B cell (primary cell): ENCODE measurements at regions of chr11 and their contacts with region 1.

Region 1: DNA sequence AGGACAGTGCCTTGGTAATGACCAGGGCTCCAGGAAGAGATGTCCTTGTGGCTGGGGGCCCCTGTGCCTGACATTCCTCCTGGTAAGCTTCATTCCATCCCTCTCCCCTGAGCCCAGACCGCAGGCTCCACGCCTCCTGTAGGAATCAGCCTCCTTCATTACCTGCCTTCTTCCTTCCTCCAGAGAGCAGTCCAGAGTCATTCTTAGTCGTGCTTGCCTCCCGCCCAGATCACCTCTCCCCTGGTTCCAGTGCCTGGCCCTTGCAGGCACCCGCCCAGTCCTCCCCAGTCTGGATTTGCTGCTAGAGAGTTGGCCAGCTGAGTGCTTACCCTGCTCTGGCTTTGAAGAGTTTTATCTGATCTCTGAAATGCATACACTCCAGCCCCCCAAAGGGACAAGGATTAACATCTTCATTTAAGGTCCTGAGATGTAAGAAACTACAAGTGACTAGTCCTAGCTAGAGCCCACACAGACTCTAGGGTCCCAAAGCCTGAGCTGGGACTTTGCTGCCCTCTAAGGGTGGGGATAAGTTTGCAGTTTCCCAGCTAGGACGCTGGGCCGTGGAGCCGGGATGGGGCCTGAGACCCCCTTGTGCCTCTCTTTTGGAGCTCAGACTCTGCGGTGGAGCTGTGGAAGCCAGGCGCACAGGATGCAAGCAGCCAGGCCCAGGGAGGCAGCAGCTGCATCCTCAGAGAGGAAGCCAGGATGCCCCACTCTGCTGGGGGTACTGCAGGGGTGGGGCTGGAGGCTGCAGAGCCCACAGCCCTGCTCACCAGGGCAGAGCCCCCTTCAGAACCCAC is 1.6 kb downstream of the NR1H3 start:
- DNase-seq: peak; percentile 38
- ATAC-seq: peak; percentile 72
- H3K4me3 ChIP-seq: no peak overlapping the region
- H3K4me3 Mint-ChIP-seq: no peak overlapping the region
- H3K27ac ChIP-seq: no peak overlapping the region
- H3K27ac Mint-ChIP-seq: no peak overlapping the region
- H3K4me1 ChIP-seq: no peaks in the 10 kb centered on the region
- H3K4me1 Mint-ChIP-seq: peaks cover 2% of the 10 kb centered on the region
- H3K27me3 ChIP-seq: no peaks in the 10 kb centered on the region
- H3K27me3 Mint-ChIP-seq: no peaks in the 10 kb centered on the region
- CTCF ChIP-seq: peak; percentile 42

Region 2: DNA sequence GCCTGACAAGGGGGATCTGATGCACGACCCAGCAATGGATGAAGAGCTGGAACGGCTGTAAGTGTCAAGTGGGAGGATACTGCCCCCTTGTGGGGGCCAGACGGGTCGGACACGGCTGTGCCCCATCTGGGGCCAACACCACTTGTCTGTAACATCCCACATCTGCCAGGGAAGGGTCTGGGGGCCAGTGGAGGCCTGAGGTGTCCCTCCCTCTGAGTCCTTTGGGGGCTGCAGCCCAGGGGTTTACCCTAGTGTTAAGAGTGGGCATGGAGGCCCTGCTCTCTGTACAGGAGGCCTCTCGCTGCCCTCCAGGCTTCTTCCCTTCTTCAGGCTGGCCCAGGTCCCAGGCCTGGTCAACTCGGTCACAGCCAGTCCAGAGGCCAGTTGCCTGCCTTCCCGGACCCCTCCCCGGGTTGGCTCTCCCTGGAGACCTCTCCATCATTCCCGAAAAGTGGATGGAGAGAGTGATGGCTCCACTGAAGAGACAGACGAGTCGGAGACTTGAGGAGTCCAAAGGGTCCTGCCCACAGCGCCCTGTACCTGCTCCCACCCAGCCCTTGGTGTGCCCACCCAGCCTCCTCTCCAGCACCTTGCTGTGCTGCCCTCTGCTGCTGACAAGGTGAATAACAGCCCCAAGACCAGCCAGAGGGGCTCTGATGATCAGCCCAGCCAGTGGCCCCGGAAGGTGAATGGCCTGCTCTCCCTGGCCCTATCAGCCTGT is 98.1 kb before region 1 on chr11:
- CTCF ChIA-PET with region 1: interaction called, 10 read pairs
- POLR2A ChIA-PET with region 1: no interaction called
- intact Hi-C with region 1: no loop called
- DNase-seq: peak; percentile 74
- ATAC-seq: peak; percentile 74
- H3K4me3 ChIP-seq: no peak overlapping the region
- H3K4me3 Mint-ChIP-seq: no peak overlapping the region
- H3K27ac ChIP-seq: no peak overlapping the region
- H3K27ac Mint-ChIP-seq: no peak overlapping the region
- H3K4me1 ChIP-seq: peaks cover 0 to 2% of the 10 kb centered on the region in 2 donors
- H3K4me1 Mint-ChIP-seq: peaks cover 1% of the 10 kb centered on the region
- H3K27me3 ChIP-seq: no peaks in the 10 kb centered on the region
- H3K27me3 Mint-ChIP-seq: no peaks in the 10 kb centered on the region
- CTCF ChIP-seq: peak; percentile 74

Region 3: DNA sequence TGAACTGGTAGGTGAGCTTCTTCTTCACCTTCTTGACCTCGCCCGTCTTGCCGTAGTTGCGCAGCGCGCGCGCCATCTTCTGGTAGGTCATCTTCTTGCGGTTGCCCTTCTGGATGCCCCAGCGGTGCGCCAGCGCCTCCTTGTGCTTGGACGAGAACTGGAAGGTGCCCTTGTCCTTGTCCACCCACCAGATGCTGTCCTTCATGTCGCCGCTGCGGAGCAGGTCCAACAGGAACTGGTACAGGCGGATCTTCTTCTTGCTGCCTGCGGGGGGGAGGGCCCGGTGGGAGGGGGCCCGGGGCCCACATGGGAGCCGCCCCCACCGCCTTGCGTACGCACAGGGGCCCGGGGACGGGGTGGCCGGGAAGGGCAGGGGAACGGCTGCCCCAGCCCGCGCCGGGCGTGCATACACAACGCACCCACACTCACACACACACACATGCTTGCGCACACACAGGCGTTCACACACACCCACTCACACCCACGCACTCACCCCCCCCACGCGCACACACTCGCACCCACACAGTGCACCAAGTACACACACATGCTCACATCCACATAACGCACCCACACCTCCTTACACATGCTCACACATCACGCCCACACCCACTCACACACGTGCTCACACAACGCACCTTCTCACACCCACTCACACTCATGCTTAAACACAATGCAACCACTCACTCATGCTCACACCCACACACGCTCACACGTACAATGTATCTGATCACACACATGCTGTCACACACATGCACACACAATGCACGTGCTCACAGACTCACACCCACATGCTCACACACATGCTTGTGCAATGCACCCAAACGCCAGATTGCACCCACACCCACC is 96.1 kb after region 1 on chr11:
- CTCF ChIA-PET with region 1: no interaction called
- POLR2A ChIA-PET with region 1: no interaction called
- intact Hi-C with region 1: no loop called
- DNase-seq: no peak
- ATAC-seq: no peak
- H3K4me3 ChIP-seq: no peak overlapping the region
- H3K4me3 Mint-ChIP-seq: no peak overlapping the region
- H3K27ac ChIP-seq: no peak overlapping the region
- H3K27ac Mint-ChIP-seq: no peak overlapping the region
- H3K4me1 ChIP-seq: peaks cover 9 to 10% of the 10 kb centered on the region in 2 donors
- H3K4me1 Mint-ChIP-seq: peaks cover 13% of the 10 kb centered on the region
- H3K27me3 ChIP-seq: no peaks in the 10 kb centered on the region
- H3K27me3 Mint-ChIP-seq: no peaks in the 10 kb centered on the region
- CTCF ChIP-seq: no peak

Region 4: GRCh38 chr11:47495011-47495855 is 235.9 kb after region 1 on chr11:
- CTCF ChIA-PET with region 1: no interaction called
- POLR2A ChIA-PET with region 1: no interaction called
- intact Hi-C with region 1: no loop called
- DNase-seq: no peak
- ATAC-seq: no peak
- H3K4me3 ChIP-seq: no peak overlapping the region
- H3K4me3 Mint-ChIP-seq: no peak overlapping the region
- H3K27ac ChIP-seq: no peak overlapping the region
- H3K27ac Mint-ChIP-seq: no peak overlapping the region
- H3K4me1 ChIP-seq: peaks cover 21 to 22% of the 10 kb centered on the region in 2 donors
- H3K4me1 Mint-ChIP-seq: peaks cover 29% of the 10 kb centered on the region
- H3K27me3 ChIP-seq: no peaks in the 10 kb centered on the region
- H3K27me3 Mint-ChIP-seq: no peaks in the 10 kb centered on the region
- CTCF ChIP-seq: no peak